IMR-90 (cell line): ENCODE measurements at regions of chr7 and their contacts with region 1.

Region 1: GRCh38 chr7:113118074-113118959 is at the start of gene SMIM30:
- DNase-seq: peak; percentile 84
- ATAC-seq: peak; percentile 100
- H3K4me3 ChIP-seq: peak within 1 kb of the TSS; percentile 73
- H3K27ac ChIP-seq: peak within 1 kb of the TSS; percentile 67
- H3K4me1 ChIP-seq: no peaks in the 10 kb centered on the region; the same call in 1 of the 2 replicates
- H3K27me3 ChIP-seq: no peaks in the 10 kb centered on the region
- CTCF ChIP-seq: no peak
- POLR2A ChIP-seq: no peak; the same call in 1 of the 2 replicates
- RAD21 ChIP-seq: peak; percentile 14
- total RNA-seq, gene SMIM30: 47.7 and 51.7 TPM in 2 replicates

Region 2: DNA sequence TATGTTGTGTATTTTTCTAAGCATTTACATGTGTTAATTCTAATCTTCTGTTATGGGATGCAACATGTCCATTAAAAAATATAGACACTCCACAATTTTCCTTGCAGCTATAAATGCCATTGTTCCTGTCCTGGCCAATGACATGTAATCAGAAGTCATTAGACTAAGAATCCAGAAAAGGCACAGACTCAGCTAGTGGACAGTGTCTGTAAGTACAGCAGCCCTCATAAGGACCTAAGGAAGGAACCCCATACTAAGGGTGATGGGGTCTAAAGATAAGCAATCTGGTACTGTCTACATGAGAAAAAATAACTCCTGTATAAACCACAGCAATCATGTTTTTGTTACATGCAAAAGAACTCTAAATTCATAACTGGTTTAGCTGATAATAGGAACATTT is 147.5 kb before region 1 on chr7:
- CTCF ChIA-PET with region 1: no interaction called
- POLR2A ChIA-PET with region 1: interaction called, 15 read pairs
- dilution Hi-C with region 1: no loop called
- in situ Hi-C with region 1: no loop called
- intact Hi-C with region 1: no loop called
- DNase-seq: no peak
- ATAC-seq: no peak
- H3K4me3 ChIP-seq: no peak overlapping the region
- H3K27ac ChIP-seq: no peak overlapping the region
- H3K4me1 ChIP-seq: no peaks in the 10 kb centered on the region
- H3K27me3 ChIP-seq: no peaks in the 10 kb centered on the region
- CTCF ChIP-seq: no peak
- POLR2A ChIP-seq: no peak
- RAD21 ChIP-seq: no peak

Region 3: GRCh38 chr7:113131367-113131766 is 13.1 kb after region 1 on chr7:
- CTCF ChIA-PET with region 1: interaction called, 3 read pairs
- POLR2A ChIA-PET with region 1: interaction called, 17 read pairs
- dilution Hi-C with region 1: no loop called
- in situ Hi-C with region 1: no loop called
- intact Hi-C with region 1: no loop called
- DNase-seq: no peak
- ATAC-seq: no peak
- H3K4me3 ChIP-seq: no peak overlapping the region
- H3K27ac ChIP-seq: no peak overlapping the region
- H3K4me1 ChIP-seq: no peaks in the 10 kb centered on the region; the same call in 1 of the 2 replicates
- H3K27me3 ChIP-seq: no peaks in the 10 kb centered on the region
- CTCF ChIP-seq: no peak
- POLR2A ChIP-seq: no peak
- RAD21 ChIP-seq: no peak

Region 4: GRCh38 chr7:113151228-113151627 is 32.9 kb after region 1 on chr7:
- CTCF ChIA-PET with region 1: no interaction called
- POLR2A ChIA-PET with region 1: no interaction called
- dilution Hi-C with region 1: no loop called
- in situ Hi-C with region 1: no loop called
- intact Hi-C with region 1: no loop called
- DNase-seq: no peak
- ATAC-seq: no peak
- H3K4me3 ChIP-seq: no peak overlapping the region
- H3K27ac ChIP-seq: no peak overlapping the region
- H3K4me1 ChIP-seq: no peaks in the 10 kb centered on the region
- H3K27me3 ChIP-seq: no peaks in the 10 kb centered on the region; the same call in 1 of the 2 replicates
- CTCF ChIP-seq: no peak
- POLR2A ChIP-seq: no peak
- RAD21 ChIP-seq: no peak